Spleen (tissue), 13 donors: ENCODE measurements at regions of chr1 and their contacts with region 1.

Region 1: GRCh38 chr1:153677718-153678505 is 576 bp upstream of the NPR1 start:
- DNase-seq: peak; percentile 81
- H3K4me3 ChIP-seq: peak overlapping the region; percentile 39 to 74 (median 50)
- H3K27ac ChIP-seq: peak overlapping the region in 1 of 8 donors; percentile 11
- H3K4me1 ChIP-seq: peaks cover 24 to 31% (median 26%) of the 10 kb centered on the region in 6 donors
- H3K27me3 ChIP-seq: peaks cover 7 to 52% (median 21%) of the 10 kb centered on the region in 7 donors
- CTCF ChIP-seq: peak; percentile 62 to 88 (median 82)
- POLR2A ChIP-seq: no peak

Region 2: GRCh38 chr1:153749408-153750005 is 71.6 kb after region 1 on chr1:
- intact Hi-C with region 1: loop called (anchors 5 kb)
- DNase-seq: peak; percentile 95
- H3K4me3 ChIP-seq: no peak overlapping the region
- H3K27ac ChIP-seq: peak overlapping the region in 1 of 8 donors; percentile 17
- H3K4me1 ChIP-seq: peaks cover 0 to 21% (median 4%) of the 10 kb centered on the region in 6 donors
- H3K27me3 ChIP-seq: no peaks in the 10 kb centered on the region
- CTCF ChIP-seq: peak; percentile 87 to 99 (median 97)
- POLR2A ChIP-seq: no peak